B cell (primary cell): ENCODE measurements at regions of chr16 and their contacts with region 1.

Region 1: GRCh38 chr16:81314603-81315270 is at the start of gene GAN:
- DNase-seq: peak; percentile 96
- ATAC-seq: peak; percentile 94
- H3K4me3 ChIP-seq: peak within 1 kb of the TSS; percentile 66 to 94 (median 79)
- H3K4me3 Mint-ChIP-seq: peak within 1 kb of the TSS; percentile 95
- H3K27ac ChIP-seq: peak within 1 kb of the TSS; percentile 30 to 76
- H3K27ac Mint-ChIP-seq: peak within 1 kb of the TSS; percentile 95
- H3K4me1 ChIP-seq: peaks cover 16 to 18% of the 10 kb centered on the region in 2 donors
- H3K4me1 Mint-ChIP-seq: peaks cover 32% of the 10 kb centered on the region
- H3K27me3 ChIP-seq: no peaks in the 10 kb centered on the region
- H3K27me3 Mint-ChIP-seq: no peaks in the 10 kb centered on the region
- CTCF ChIP-seq: no peak
- total RNA-seq, gene GAN: 6.9 and 11.6 TPM in 2 replicates

Region 2: GRCh38 chr16:81006814-81007696 is 307.7 kb before region 1 on chr16 and contains the starts of genes CENPN and CMC2:
- CTCF ChIA-PET with region 1: interaction called, 5 read pairs
- POLR2A ChIA-PET with region 1: no interaction called
- intact Hi-C with region 1: loop called (anchors 1 kb)
- DNase-seq: peak; percentile 100
- ATAC-seq: peak; percentile 82
- H3K4me3 ChIP-seq: peak within 1 kb of the TSS; percentile 89 to 97 (median 94)
- H3K4me3 Mint-ChIP-seq: peak within 1 kb of the TSS; percentile 99
- H3K27ac ChIP-seq: peak within 1 kb of the TSS; percentile 97 to 99
- H3K27ac Mint-ChIP-seq: peak within 1 kb of the TSS; percentile 100
- H3K4me1 ChIP-seq: peaks cover 25 to 38% of the 10 kb centered on the region in 2 donors
- H3K4me1 Mint-ChIP-seq: peaks cover 42% of the 10 kb centered on the region
- H3K27me3 ChIP-seq: no peaks in the 10 kb centered on the region
- H3K27me3 Mint-ChIP-seq: no peaks in the 10 kb centered on the region
- CTCF ChIP-seq: no peak
- total RNA-seq, gene CENPN: 3.5 and 4.0 TPM in 2 replicates
- total RNA-seq, gene CMC2: 21.4 and 25.7 TPM in 2 replicates

Region 3: DNA sequence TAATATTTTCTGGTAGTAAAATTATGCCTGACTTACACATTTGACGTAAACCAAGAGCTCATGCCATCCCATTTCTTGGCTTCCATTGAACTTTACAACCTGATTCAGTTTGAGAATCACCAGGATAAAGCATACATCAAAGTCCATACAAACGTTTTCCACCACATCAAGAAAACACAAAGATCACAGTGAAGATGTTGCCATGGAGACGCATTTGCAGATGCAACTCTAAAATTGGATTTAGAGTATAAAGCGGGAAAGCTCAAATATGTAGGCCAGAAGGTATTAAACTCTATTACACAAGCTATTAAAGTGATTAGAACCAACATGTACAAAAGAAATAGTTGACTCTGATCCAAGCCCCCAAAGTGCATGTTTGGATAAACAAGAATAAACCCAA is 248.1 kb before region 1 on chr16:
- CTCF ChIA-PET with region 1: no interaction called
- POLR2A ChIA-PET with region 1: no interaction called
- intact Hi-C with region 1: no loop called
- DNase-seq: no peak
- ATAC-seq: no peak
- H3K4me3 ChIP-seq: no peak overlapping the region
- H3K4me3 Mint-ChIP-seq: no peak overlapping the region
- H3K27ac ChIP-seq: no peak overlapping the region
- H3K27ac Mint-ChIP-seq: no peak overlapping the region
- H3K4me1 ChIP-seq: no peaks in the 10 kb centered on the region
- H3K4me1 Mint-ChIP-seq: no peaks in the 10 kb centered on the region
- H3K27me3 ChIP-seq: no peaks in the 10 kb centered on the region
- H3K27me3 Mint-ChIP-seq: peaks cover 3% of the 10 kb centered on the region
- CTCF ChIP-seq: no peak

Region 4: GRCh38 chr16:81095953-81096717 is 218.6 kb before region 1 on chr16 and contains the start of gene GCSH:
- CTCF ChIA-PET with region 1: no interaction called
- POLR2A ChIA-PET with region 1: no interaction called
- intact Hi-C with region 1: loop called (anchors 1 kb)
- DNase-seq: peak; percentile 99
- ATAC-seq: peak; percentile 98
- H3K4me3 ChIP-seq: peak within 1 kb of the TSS; percentile 50 to 74 (median 65)
- H3K4me3 Mint-ChIP-seq: peak within 1 kb of the TSS; percentile 84
- H3K27ac ChIP-seq: peak within 1 kb of the TSS in 1 of 2 donors; percentile 62
- H3K27ac Mint-ChIP-seq: peak within 1 kb of the TSS; percentile 0
- H3K4me1 ChIP-seq: peaks cover 7 to 11% of the 10 kb centered on the region in 2 donors
- H3K4me1 Mint-ChIP-seq: peaks cover 11% of the 10 kb centered on the region
- H3K27me3 ChIP-seq: no peaks in the 10 kb centered on the region
- H3K27me3 Mint-ChIP-seq: no peaks in the 10 kb centered on the region
- CTCF ChIP-seq: no peak
- total RNA-seq, gene GCSH: 4.5 and 6.2 TPM in 2 replicates

Region 5: DNA sequence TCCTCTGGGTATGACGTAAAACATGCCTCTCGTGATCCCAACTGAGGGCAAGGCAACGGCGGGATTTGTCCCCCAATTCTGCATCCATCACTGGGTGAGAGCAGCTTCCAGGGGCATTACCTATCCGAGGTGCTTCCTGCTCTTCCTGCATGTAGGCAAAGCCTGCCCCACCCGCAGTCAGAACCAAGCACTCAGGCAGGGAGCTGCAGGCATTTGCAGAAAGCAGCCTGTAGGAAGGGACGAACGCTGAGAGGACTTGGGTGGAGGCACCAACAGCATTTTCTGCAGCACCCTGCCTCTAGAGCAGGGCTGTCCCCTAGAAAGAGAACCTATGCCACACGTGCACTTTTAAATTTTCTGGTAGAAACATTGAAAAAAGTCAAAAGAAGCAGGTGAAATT is 70.8 kb before region 1 on chr16:
- CTCF ChIA-PET with region 1: no interaction called
- POLR2A ChIA-PET with region 1: no interaction called
- intact Hi-C with region 1: no loop called
- DNase-seq: no peak
- ATAC-seq: no peak
- H3K4me3 ChIP-seq: no peak overlapping the region
- H3K4me3 Mint-ChIP-seq: no peak overlapping the region
- H3K27ac ChIP-seq: no peak overlapping the region
- H3K27ac Mint-ChIP-seq: no peak overlapping the region
- H3K4me1 ChIP-seq: no peaks in the 10 kb centered on the region
- H3K4me1 Mint-ChIP-seq: no peaks in the 10 kb centered on the region
- H3K27me3 ChIP-seq: no peaks in the 10 kb centered on the region
- H3K27me3 Mint-ChIP-seq: peaks cover 6% of the 10 kb centered on the region
- CTCF ChIP-seq: no peak

Region 6: DNA sequence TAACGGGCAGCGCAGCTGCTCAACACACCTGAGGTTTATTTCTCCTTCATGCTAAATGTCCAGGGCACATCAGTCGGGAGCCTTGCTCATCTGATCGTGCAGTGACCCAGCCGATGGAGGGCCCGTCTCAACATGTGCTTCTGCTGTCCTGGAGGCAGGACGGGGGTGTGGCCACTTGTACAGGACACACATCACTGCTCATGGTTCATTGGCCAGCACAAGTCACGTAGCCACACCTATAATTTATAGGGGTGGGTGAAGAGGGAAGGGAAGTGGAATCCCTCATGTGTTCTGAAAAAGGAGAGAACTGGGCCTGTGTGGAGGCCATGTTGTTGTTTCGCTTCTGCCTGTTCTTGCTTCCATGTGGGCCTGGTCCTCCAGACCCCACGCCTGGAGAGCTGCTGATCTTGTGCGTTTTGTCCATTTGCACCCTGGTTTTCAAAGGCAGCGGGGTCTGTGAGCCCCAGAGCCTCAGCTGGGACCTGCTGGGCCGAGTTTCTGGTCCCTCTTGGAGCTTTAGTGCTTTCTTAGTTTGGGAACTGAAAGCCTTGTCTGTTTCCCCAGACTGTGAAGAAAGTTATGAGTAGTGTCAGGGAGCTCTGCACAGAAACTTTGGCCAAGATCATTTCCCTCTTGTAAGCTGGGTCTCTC is 190.4 kb after region 1 on chr16:
- CTCF ChIA-PET with region 1: no interaction called
- POLR2A ChIA-PET with region 1: no interaction called
- intact Hi-C with region 1: loop called (anchors 10 kb)
- DNase-seq: peak; percentile 60
- ATAC-seq: peak; percentile 6
- H3K4me3 ChIP-seq: no peak overlapping the region
- H3K4me3 Mint-ChIP-seq: peak overlapping the region; percentile 70
- H3K27ac ChIP-seq: peak overlapping the region; percentile 88 to 91
- H3K27ac Mint-ChIP-seq: peak overlapping the region; percentile 90
- H3K4me1 ChIP-seq: peaks cover 61 to 64% of the 10 kb centered on the region in 2 donors
- H3K4me1 Mint-ChIP-seq: peaks cover 68% of the 10 kb centered on the region
- H3K27me3 ChIP-seq: no peaks in the 10 kb centered on the region
- H3K27me3 Mint-ChIP-seq: no peaks in the 10 kb centered on the region
- CTCF ChIP-seq: no peak